ENCODE measurements at regions of chr3 and their contacts with region 1.

Region 1: GRCh38 chr3:45942051-45942825 is 1.0 kb upstream of the CXCR6 start:
- DNase-seq: no peak
- H3K4me3 ChIP-seq: no peak overlapping the region
- H3K27ac ChIP-seq: peak overlapping the region in 1 of 2 donors; percentile 8
- H3K4me1 ChIP-seq: peaks cover 0 to 9% (median 6%) of the 10 kb centered on the region in 3 donors
- H3K27me3 ChIP-seq: no peaks in the 10 kb centered on the region
- CTCF ChIP-seq: no peak

Region 2: GRCh38 chr3:45105855-45106671 is 836.2 kb before region 1 on chr3:
- intact Hi-C with region 1: no loop called
- DNase-seq: no peak
- H3K4me3 ChIP-seq: no peak overlapping the region
- H3K27ac ChIP-seq: no peak overlapping the region
- H3K4me1 ChIP-seq: no peaks in the 10 kb centered on the region
- H3K27me3 ChIP-seq: no peaks in the 10 kb centered on the region
- CTCF ChIP-seq: no peak

Region 3: GRCh38 chr3:45507820-45508317 is 434.4 kb before region 1 on chr3:
- intact Hi-C with region 1: no loop called
- DNase-seq: peak in 4 of 5 donors; percentile 57 to 84 (median 74)
- H3K4me3 ChIP-seq: no peak overlapping the region
- H3K27ac ChIP-seq: no peak overlapping the region
- H3K4me1 ChIP-seq: peaks cover 6 to 13% (median 6%) of the 10 kb centered on the region in 3 donors
- H3K27me3 ChIP-seq: no peaks in the 10 kb centered on the region
- CTCF ChIP-seq: no peak

Region 4: GRCh38 chr3:45817831-45818522 is 124.3 kb before region 1 on chr3:
- intact Hi-C with region 1: no loop called
- DNase-seq: no peak
- H3K4me3 ChIP-seq: no peak overlapping the region
- H3K27ac ChIP-seq: peak overlapping the region in 1 of 2 donors; percentile 51
- H3K4me1 ChIP-seq: no peaks in the 10 kb centered on the region
- H3K27me3 ChIP-seq: no peaks in the 10 kb centered on the region
- CTCF ChIP-seq: no peak

Region 5: DNA sequence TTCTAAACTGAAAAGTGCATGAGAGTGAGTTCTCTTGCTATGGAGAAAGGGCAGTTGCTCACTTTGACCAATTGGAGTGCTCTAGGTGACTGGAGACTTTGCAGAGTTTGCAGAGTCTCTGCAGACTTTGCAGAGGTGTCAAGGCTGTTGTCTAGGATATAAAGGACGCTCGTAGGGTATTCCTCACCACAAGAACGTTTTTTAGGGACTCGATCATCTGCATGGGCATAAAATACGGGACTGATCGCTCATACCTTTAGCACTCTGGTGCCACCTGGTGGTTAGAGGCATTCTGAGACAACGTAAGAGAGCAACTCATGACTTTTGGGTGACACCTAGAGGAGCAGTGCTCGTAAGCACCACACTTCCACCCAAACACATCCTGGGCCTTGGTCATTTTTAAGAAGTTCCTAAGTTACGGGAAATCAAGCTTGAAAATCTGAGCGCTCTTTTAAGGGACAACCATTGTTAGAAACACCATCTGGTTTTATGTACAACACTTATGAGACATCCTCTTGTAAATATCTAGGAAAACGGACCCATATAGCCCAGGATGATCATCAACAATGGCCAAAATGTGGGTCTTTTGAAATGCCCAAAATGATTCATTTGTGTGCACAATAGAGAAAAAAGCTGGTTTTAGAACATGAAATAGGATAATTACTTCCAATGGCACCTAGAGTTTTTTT is 136.6 kb after region 1 on chr3:
- intact Hi-C with region 1: loop called (anchors 5 kb)
- DNase-seq: peak; percentile 80 to 97 (median 88)
- H3K4me3 ChIP-seq: peak overlapping the region in 2 of 3 donors; percentile 27 to 55
- H3K27ac ChIP-seq: no peak overlapping the region
- H3K4me1 ChIP-seq: peaks cover 0 to 10% (median 3%) of the 10 kb centered on the region in 3 donors
- H3K27me3 ChIP-seq: no peaks in the 10 kb centered on the region
- CTCF ChIP-seq: peak; percentile 95

Region 6: GRCh38 chr3:46378426-46378942 is 436.2 kb after region 1 on chr3:
- intact Hi-C with region 1: loop called (anchors 10 kb)
- DNase-seq: peak; percentile 56 to 85 (median 67)
- H3K4me3 ChIP-seq: no peak overlapping the region
- H3K27ac ChIP-seq: no peak overlapping the region
- H3K4me1 ChIP-seq: peaks cover 0 to 2% (median 0%) of the 10 kb centered on the region in 3 donors
- H3K27me3 ChIP-seq: no peaks in the 10 kb centered on the region
- CTCF ChIP-seq: peak; percentile 57

Region 7: GRCh38 chr3:47073685-47074084 is 1131.4 kb after region 1 on chr3:
- intact Hi-C with region 1: no loop called
- DNase-seq: no peak
- H3K4me3 ChIP-seq: no peak overlapping the region
- H3K27ac ChIP-seq: no peak overlapping the region
- H3K4me1 ChIP-seq: no peaks in the 10 kb centered on the region
- H3K27me3 ChIP-seq: no peaks in the 10 kb centered on the region
- CTCF ChIP-seq: no peak

Measured in kidney (tissue), 22 donors.